ENCODE measurements at regions of chr14 and their contacts with region 1.

Region 1: DNA sequence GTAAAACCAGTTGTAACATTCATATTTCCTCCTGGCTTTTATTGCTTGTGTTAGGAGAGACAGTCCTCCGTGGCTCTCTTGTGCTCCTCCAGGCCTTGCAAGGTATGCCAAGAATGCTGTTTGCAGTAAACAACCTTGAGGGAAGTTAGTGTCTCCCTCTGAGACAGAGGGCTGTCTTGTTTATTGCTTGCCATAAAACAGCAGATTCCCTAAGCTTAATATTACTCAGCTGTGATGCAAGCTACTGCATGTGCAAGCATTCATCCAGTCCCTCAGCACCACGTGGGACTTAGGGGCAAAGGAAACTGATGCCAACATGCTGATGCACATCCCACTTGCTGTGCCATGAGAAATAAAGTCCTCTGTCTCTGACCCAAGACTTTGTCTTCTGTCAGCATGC is 6.6 kb downstream of the POMT2 start:
- DNase-seq: no peak
- ATAC-seq: no peak
- H3K4me3 ChIP-seq: no peak overlapping the region
- H3K4me3 Mint-ChIP-seq: no peak overlapping the region
- H3K27ac ChIP-seq: no peak overlapping the region
- H3K27ac Mint-ChIP-seq: no peak overlapping the region
- H3K4me1 ChIP-seq: peaks cover 4 to 9% of the 10 kb centered on the region in 2 donors
- H3K4me1 Mint-ChIP-seq: peaks cover 4% of the 10 kb centered on the region
- H3K27me3 ChIP-seq: no peaks in the 10 kb centered on the region
- H3K27me3 Mint-ChIP-seq: no peaks in the 10 kb centered on the region
- CTCF ChIP-seq: no peak

Region 2: GRCh38 chr14:76710056-76711010 is 603.7 kb before region 1 on chr14:
- CTCF ChIA-PET with region 1: no interaction called
- POLR2A ChIA-PET with region 1: no interaction called
- intact Hi-C with region 1: loop called (anchors 5 kb)
- DNase-seq: peak; percentile 49
- ATAC-seq: no peak
- H3K4me3 ChIP-seq: no peak overlapping the region
- H3K4me3 Mint-ChIP-seq: no peak overlapping the region
- H3K27ac ChIP-seq: no peak overlapping the region
- H3K27ac Mint-ChIP-seq: no peak overlapping the region
- H3K4me1 ChIP-seq: peaks cover 0 to under 1% of the 10 kb centered on the region in 2 donors
- H3K4me1 Mint-ChIP-seq: no peaks in the 10 kb centered on the region
- H3K27me3 ChIP-seq: no peaks in the 10 kb centered on the region
- H3K27me3 Mint-ChIP-seq: peaks cover 15% of the 10 kb centered on the region
- CTCF ChIP-seq: peak; percentile 81

Region 3: GRCh38 chr14:77111043-77111442 is 203.0 kb before region 1 on chr14:
- CTCF ChIA-PET with region 1: interaction called, 32 read pairs
- POLR2A ChIA-PET with region 1: no interaction called
- intact Hi-C with region 1: no loop called
- DNase-seq: no peak
- ATAC-seq: no peak
- H3K4me3 ChIP-seq: no peak overlapping the region
- H3K4me3 Mint-ChIP-seq: no peak overlapping the region
- H3K27ac ChIP-seq: no peak overlapping the region
- H3K27ac Mint-ChIP-seq: peak overlapping the region; percentile 26
- H3K4me1 ChIP-seq: peaks cover 4 to 5% of the 10 kb centered on the region in 2 donors
- H3K4me1 Mint-ChIP-seq: peaks cover 25% of the 10 kb centered on the region
- H3K27me3 ChIP-seq: no peaks in the 10 kb centered on the region
- H3K27me3 Mint-ChIP-seq: no peaks in the 10 kb centered on the region
- CTCF ChIP-seq: no peak

Region 4: DNA sequence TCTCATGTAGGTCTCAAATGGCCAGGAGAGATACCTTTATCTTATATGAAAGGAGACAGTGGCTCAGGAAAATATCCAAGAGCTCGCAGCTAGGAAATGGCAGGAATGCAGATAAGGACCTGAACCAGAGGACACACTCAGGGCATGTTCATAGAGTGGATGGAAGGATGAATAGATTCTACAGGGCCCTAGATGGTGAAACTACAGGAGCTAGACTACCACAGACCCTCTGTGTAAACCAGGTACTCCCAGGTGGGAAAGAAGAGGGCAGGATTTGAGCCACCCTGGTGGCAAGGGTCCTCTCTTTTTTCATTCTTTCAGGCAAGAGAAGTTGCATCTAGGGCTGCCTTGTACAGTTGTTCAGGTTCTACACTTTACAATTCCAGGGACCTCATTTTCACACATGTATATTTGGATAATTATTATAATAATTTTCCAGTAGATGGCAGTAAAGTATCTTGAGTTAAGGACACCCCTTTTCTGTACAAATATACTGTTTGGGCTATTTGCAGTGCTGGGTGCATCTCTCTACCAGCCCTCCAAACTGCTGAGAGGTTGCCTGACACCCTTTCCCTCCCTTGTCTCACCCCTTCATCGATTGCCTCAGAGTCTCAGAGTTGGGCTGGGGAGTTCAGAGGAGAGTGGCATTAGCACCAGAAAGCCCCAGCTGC is 162.0 kb before region 1 on chr14:
- CTCF ChIA-PET with region 1: interaction called, 108 read pairs
- POLR2A ChIA-PET with region 1: interaction called, 4 read pairs
- intact Hi-C with region 1: no loop called
- DNase-seq: peak; percentile 46
- ATAC-seq: peak; percentile 58
- H3K4me3 ChIP-seq: no peak overlapping the region
- H3K4me3 Mint-ChIP-seq: no peak overlapping the region
- H3K27ac ChIP-seq: no peak overlapping the region
- H3K27ac Mint-ChIP-seq: no peak overlapping the region
- H3K4me1 ChIP-seq: no peaks in the 10 kb centered on the region
- H3K4me1 Mint-ChIP-seq: no peaks in the 10 kb centered on the region
- H3K27me3 ChIP-seq: peaks cover 0 to 29% (median 2%) of the 10 kb centered on the region in 4 experiments
- H3K27me3 Mint-ChIP-seq: peaks cover 42% of the 10 kb centered on the region
- CTCF ChIP-seq: peak; percentile 31

Region 5: GRCh38 chr14:77301103-77301502 is 12.9 kb before region 1 on chr14:
- CTCF ChIA-PET with region 1: interaction called, 122 read pairs
- POLR2A ChIA-PET with region 1: no interaction called
- intact Hi-C with region 1: loop called (anchors 1 kb)
- DNase-seq: peak; percentile 77
- ATAC-seq: peak; percentile 56
- H3K4me3 ChIP-seq: no peak overlapping the region
- H3K4me3 Mint-ChIP-seq: no peak overlapping the region
- H3K27ac ChIP-seq: no peak overlapping the region
- H3K27ac Mint-ChIP-seq: no peak overlapping the region
- H3K4me1 ChIP-seq: no peaks in the 10 kb centered on the region
- H3K4me1 Mint-ChIP-seq: peaks cover 2% of the 10 kb centered on the region
- H3K27me3 ChIP-seq: no peaks in the 10 kb centered on the region
- H3K27me3 Mint-ChIP-seq: no peaks in the 10 kb centered on the region
- CTCF ChIP-seq: peak; percentile 74

Region 6: GRCh38 chr14:77376771-77377501 is 62.9 kb after region 1 on chr14 and contains the starts of genes SAMD15 and TMED8:
- CTCF ChIA-PET with region 1: interaction called, 17 read pairs
- POLR2A ChIA-PET with region 1: interaction called, 4 read pairs
- intact Hi-C with region 1: no loop called
- DNase-seq: peak; percentile 92
- ATAC-seq: peak; percentile 92
- H3K4me3 ChIP-seq: peak within 1 kb of the TSS; percentile 79 to 100 (median 93)
- H3K4me3 Mint-ChIP-seq: peak within 1 kb of the TSS; percentile 95
- H3K27ac ChIP-seq: peak within 1 kb of the TSS; percentile 18 to 85
- H3K27ac Mint-ChIP-seq: peak within 1 kb of the TSS; percentile 91
- H3K4me1 ChIP-seq: peaks cover 39 to 43% of the 10 kb centered on the region in 2 donors
- H3K4me1 Mint-ChIP-seq: peaks cover 40% of the 10 kb centered on the region
- H3K27me3 ChIP-seq: no peaks in the 10 kb centered on the region
- H3K27me3 Mint-ChIP-seq: no peaks in the 10 kb centered on the region
- CTCF ChIP-seq: peak; percentile 48
- total RNA-seq, gene SAMD15: 0.96 and 1.00 TPM in 2 replicates
- total RNA-seq, gene TMED8: 43.8 and 44.7 TPM in 2 replicates

Region 7: GRCh38 chr14:77406718-77407117 is 92.7 kb after region 1 on chr14:
- CTCF ChIA-PET with region 1: interaction called, 11 read pairs
- POLR2A ChIA-PET with region 1: no interaction called
- intact Hi-C with region 1: no loop called
- DNase-seq: no peak
- ATAC-seq: no peak
- H3K4me3 ChIP-seq: no peak overlapping the region
- H3K4me3 Mint-ChIP-seq: no peak overlapping the region
- H3K27ac ChIP-seq: no peak overlapping the region
- H3K27ac Mint-ChIP-seq: no peak overlapping the region
- H3K4me1 ChIP-seq: peaks cover 3 to 5% of the 10 kb centered on the region in 2 donors
- H3K4me1 Mint-ChIP-seq: peaks cover 11% of the 10 kb centered on the region
- H3K27me3 ChIP-seq: no peaks in the 10 kb centered on the region
- H3K27me3 Mint-ChIP-seq: no peaks in the 10 kb centered on the region
- CTCF ChIP-seq: no peak

Region 8: GRCh38 chr14:77470192-77470870 is 156.3 kb after region 1 on chr14:
- CTCF ChIA-PET with region 1: no interaction called
- POLR2A ChIA-PET with region 1: no interaction called
- intact Hi-C with region 1: no loop called
- DNase-seq: no peak
- ATAC-seq: no peak
- H3K4me3 ChIP-seq: no peak overlapping the region
- H3K4me3 Mint-ChIP-seq: no peak overlapping the region
- H3K27ac ChIP-seq: no peak overlapping the region
- H3K27ac Mint-ChIP-seq: no peak overlapping the region
- H3K4me1 ChIP-seq: no peaks in the 10 kb centered on the region
- H3K4me1 Mint-ChIP-seq: no peaks in the 10 kb centered on the region
- H3K27me3 ChIP-seq: no peaks in the 10 kb centered on the region
- H3K27me3 Mint-ChIP-seq: no peaks in the 10 kb centered on the region
- CTCF ChIP-seq: no peak